ENCODE measurements at regions of chr3 and their contacts with region 1.

Region 1: DNA sequence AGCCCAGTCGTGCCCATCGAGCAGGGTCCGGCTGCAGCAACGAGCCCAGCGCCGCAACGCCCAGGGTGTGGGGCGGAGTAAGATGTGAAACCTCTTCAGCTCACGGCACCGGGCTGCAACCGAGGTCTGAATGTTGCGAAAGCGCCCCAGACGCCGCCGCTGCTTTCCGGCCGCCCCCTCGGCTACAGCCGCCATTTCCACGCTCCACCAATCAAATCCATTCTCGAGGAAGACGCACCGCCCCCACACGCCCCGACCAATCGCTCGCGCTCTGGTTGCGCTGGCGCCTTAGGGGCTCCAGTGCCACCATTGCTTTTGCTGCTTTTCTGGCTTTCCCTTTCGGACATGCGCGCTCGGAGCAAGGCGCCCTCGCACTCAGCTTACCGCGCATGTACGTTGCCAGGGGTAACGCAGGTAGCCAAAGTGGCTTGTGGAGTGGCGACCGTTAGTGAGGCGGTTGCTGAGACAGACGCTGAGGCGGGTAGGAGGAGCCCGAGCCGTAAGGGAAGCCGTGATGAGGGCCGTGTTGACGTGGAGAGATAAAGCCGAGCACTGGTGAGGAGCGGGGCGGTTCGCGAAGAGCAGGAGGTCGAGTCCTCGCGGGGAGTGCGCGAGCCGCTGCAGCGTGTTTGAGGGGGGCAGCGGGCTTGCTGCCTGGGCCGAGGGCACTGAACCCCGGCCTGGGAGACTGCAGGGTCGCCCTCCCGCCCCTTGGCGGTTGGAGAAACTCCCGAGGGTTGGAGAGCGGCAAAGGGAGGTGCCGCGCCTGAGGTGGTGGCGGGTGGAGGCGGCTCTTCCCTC is at the starts of genes IFT122 and MBD4:
- DNase-seq: peak; percentile 99
- ATAC-seq: peak; percentile 91
- H3K4me3 ChIP-seq: peak within 1 kb of the TSS; percentile 91
- H3K27ac ChIP-seq: peak within 1 kb of the TSS; percentile 91
- H3K4me1 ChIP-seq: peaks cover 14% of the 10 kb centered on the region; the same call in 1 of the 2 replicates
- H3K27me3 ChIP-seq: no peaks in the 10 kb centered on the region
- CTCF ChIP-seq: no peak
- EP300 ChIP-seq: no peak; a peak in 1 of 4 replicates
- POLR2A ChIP-seq: peak; percentile 89
- RAD21 ChIP-seq: no peak
- polyA plus RNA-seq, gene IFT122: 1.8 to 2.0 TPM
- polyA plus RNA-seq, gene MBD4: 17.7 to 23.6 TPM

Region 2: DNA sequence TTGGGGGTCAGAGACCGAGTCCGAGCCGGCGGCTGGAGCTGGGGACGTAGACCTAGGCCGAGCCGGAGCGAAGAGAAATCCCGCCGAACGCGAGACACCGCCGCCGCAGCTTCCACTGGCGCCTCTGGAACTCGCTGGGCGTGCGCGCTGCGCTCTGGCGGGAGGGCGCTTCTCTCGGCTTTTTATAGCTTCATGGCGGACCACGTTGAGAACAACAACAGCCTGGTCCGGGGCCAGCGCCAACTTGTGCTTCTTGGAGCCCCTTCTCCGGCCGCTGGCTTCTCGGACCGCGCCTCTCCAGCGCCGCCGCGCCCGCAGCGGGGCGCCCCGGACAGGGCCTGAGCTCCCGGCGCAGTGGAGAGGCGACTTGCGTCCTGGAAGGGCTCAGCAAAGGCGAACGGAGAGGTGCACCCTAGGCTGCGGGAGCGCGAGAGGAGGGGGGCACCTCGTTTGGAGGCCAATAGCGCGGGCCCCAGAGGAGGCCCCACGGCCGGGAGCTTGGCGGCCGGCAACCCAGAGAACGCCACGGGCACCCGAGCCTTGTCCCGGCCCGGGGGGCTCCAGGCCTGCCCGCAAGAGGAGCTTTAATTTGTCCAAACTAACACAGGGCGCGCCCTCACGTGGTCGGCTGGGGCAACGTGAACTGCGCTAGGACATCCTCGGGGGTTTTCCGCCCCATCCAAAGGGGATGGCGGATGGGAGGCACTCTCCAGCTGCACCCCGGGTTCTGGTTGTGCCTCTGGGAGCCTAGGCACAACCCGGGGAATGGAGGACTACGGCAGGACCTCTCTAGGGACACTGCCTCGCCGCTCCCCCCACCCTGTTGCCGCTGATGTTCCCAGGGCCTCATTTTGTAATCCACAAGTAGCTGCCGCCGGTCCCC is 123.6 kb before region 1 on chr3:
- CTCF ChIA-PET with region 1: interaction called, 9 read pairs
- POLR2A ChIA-PET with region 1: interaction called, 15 read pairs
- RAD21 ChIA-PET with region 1: interaction called, 5 read pairs
- SMC1A ChIA-PET with region 1: interaction called, 7 read pairs
- in situ Hi-C with region 1: no loop called
- intact Hi-C with region 1: no loop called
- DNase-seq: no peak
- ATAC-seq: peak; percentile 56
- H3K4me3 ChIP-seq: peak overlapping the region; percentile 88
- H3K27ac ChIP-seq: peak overlapping the region; percentile 41; the same call in 1 of the 2 replicates
- H3K4me1 ChIP-seq: peaks cover 16% of the 10 kb centered on the region
- H3K27me3 ChIP-seq: peaks cover 0 to 3% of the 10 kb centered on the region in 2 experiments; a peak in 2 of 4 replicates
- CTCF ChIP-seq: peak; percentile 61 to 76 (median 71)
- EP300 ChIP-seq: peak in 1 of 2 experiments; percentile 22; a peak in 1 of 4 replicates
- POLR2A ChIP-seq: peak; percentile 87
- RAD21 ChIP-seq: peak; percentile 52

Region 3: DNA sequence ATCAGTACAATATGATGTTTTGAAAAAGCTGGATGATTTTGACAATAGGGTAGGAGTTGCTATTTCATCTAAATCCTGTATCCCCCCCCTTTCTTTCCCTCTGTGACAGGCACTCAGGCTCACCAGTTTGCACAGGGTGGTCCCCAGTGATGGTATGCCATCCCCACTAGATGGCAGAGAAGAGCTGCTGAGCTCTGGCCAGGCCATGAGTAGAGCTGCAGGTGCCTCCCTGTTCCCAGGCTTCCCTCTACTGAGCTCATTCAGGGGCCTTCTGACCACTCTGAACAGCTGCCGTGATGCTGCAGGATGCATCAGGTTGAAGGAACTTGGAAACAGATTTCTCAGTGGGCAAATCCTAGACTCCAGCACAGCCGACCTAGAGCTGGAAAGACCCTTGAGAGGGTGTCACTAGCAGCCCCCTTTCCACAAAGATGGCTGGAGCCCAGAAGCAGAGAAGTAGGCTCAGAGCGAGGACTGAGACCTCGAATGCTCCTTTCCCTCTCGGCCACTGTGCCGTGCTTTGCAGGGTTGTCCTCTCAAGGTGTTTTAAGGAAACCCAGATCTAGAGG is 56.6 kb before region 1 on chr3:
- CTCF ChIA-PET with region 1: interaction called, 60 read pairs
- POLR2A ChIA-PET with region 1: interaction called, 4 read pairs
- RAD21 ChIA-PET with region 1: interaction called, 78 read pairs
- SMC1A ChIA-PET with region 1: interaction called, 72 read pairs
- in situ Hi-C with region 1: no loop called
- intact Hi-C with region 1: loop called (anchors 5 kb)
- DNase-seq: no peak
- ATAC-seq: peak; percentile 99
- H3K4me3 ChIP-seq: no peak overlapping the region
- H3K27ac ChIP-seq: no peak overlapping the region
- H3K4me1 ChIP-seq: no peaks in the 10 kb centered on the region
- H3K27me3 ChIP-seq: no peaks in the 10 kb centered on the region
- CTCF ChIP-seq: peak; percentile 85 to 89 (median 86)
- EP300 ChIP-seq: no peak
- POLR2A ChIP-seq: no peak
- RAD21 ChIP-seq: peak; percentile 85

Region 4: DNA sequence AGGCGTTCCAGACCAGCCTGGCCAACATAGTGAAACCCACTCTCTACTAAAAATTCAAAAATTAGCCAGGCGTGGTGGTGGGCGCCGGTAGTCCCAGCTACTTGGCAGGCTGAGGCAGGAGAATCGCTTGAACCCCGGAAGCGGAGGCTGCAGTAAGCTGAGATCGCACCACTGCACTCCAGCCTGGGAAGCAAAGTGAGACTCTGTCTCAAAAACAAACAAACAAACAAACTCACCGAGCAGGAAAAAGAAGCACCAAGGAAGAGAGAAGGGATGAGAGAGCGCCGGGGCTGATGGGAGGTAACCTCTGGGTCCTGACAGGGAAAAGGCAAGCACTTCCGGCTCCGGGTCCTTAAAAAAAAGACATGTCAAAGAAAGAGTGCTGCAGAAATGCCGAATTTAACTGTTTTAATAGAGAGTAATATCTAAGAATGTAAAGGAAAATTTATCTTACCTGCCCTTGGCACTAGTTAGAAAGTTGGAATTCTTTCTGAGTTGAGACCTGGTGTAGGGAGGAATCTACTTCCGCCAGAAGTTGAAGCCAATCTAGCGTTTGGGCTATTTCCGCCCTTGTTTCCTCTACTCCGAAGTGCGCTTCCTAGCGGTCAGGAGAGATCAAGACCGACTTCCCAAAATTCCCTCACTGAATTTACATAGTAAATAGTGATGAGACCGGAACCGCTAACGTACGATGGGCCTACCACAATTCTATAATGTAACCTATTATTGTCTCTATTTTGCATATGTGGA is 40.7 kb before region 1 on chr3:
- CTCF ChIA-PET with region 1: interaction called, 33 read pairs
- POLR2A ChIA-PET with region 1: interaction called, 18 read pairs
- RAD21 ChIA-PET with region 1: interaction called, 36 read pairs
- SMC1A ChIA-PET with region 1: interaction called, 275 read pairs
- in situ Hi-C with region 1: no loop called
- intact Hi-C with region 1: loop called (anchors 2 kb)
- DNase-seq: peak; percentile 93
- ATAC-seq: peak; percentile 83
- H3K4me3 ChIP-seq: peak overlapping the region; percentile 69
- H3K27ac ChIP-seq: peak overlapping the region; percentile 87
- H3K4me1 ChIP-seq: no peaks in the 10 kb centered on the region; the same call in 1 of the 2 replicates
- H3K27me3 ChIP-seq: no peaks in the 10 kb centered on the region
- CTCF ChIP-seq: peak; percentile 82 to 91 (median 87)
- EP300 ChIP-seq: no peak
- POLR2A ChIP-seq: no peak
- RAD21 ChIP-seq: peak; percentile 31; the same call in 1 of the 2 replicates

Region 5: DNA sequence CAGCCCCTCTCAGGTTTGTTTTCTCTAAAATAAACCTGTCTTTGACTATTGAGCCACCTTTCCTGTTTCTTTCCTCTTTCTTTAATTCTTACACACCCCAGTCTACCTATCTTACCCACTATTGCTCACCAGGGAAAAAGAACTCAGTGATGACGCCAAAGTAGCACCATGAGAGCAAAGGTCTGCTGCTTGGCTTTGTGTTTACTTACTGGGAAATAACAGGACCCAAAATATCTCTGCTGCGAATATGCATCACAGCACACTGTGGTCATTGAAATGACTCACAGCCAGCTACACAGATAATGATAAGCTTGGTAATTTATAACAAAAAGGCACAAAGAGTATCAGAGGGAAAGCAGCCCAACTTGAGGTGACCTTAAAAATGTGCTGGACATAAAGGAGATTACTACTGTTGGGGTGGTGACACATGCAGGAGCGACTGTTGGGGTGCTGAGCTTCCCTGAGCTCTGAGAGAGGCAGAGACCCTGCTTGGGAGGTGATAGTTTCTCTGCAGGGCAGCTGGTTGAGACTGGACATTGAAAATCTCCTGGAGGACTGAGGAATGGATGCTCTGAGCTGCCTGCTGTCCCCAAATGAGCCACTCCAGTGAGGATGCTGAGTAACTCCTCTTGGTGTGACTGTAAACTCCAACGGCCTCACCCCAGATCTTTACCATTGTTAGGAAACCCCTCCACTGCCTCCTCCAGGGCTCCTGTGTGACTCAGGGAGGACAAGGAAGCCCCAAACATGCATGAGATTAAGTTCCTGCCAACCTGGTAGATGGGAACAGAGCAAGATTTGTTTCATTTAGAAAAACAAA is 26.1 kb before region 1 on chr3:
- CTCF ChIA-PET with region 1: interaction called, 24 read pairs
- POLR2A ChIA-PET with region 1: interaction called, 24 read pairs
- RAD21 ChIA-PET with region 1: interaction called, 32 read pairs
- SMC1A ChIA-PET with region 1: interaction called, 275 read pairs
- in situ Hi-C with region 1: no loop called
- intact Hi-C with region 1: no loop called
- DNase-seq: no peak
- ATAC-seq: peak; percentile 96
- H3K4me3 ChIP-seq: no peak overlapping the region
- H3K27ac ChIP-seq: no peak overlapping the region
- H3K4me1 ChIP-seq: peaks cover 6% of the 10 kb centered on the region
- H3K27me3 ChIP-seq: no peaks in the 10 kb centered on the region
- CTCF ChIP-seq: no peak
- EP300 ChIP-seq: peak; percentile 79 to 82; a peak in 2 of 4 replicates
- POLR2A ChIP-seq: no peak
- RAD21 ChIP-seq: no peak

Region 6: GRCh38 chr3:129421988-129422745 is 17.9 kb before region 1 on chr3:
- CTCF ChIA-PET with region 1: interaction called, 17 read pairs
- POLR2A ChIA-PET with region 1: interaction called, 40 read pairs
- RAD21 ChIA-PET with region 1: interaction called, 12 read pairs
- SMC1A ChIA-PET with region 1: interaction called, 22 read pairs
- in situ Hi-C with region 1: no loop called
- intact Hi-C with region 1: no loop called
- DNase-seq: no peak
- ATAC-seq: no peak
- H3K4me3 ChIP-seq: no peak overlapping the region
- H3K27ac ChIP-seq: no peak overlapping the region
- H3K4me1 ChIP-seq: peaks cover 19% of the 10 kb centered on the region
- H3K27me3 ChIP-seq: no peaks in the 10 kb centered on the region
- CTCF ChIP-seq: no peak
- EP300 ChIP-seq: no peak
- POLR2A ChIP-seq: no peak
- RAD21 ChIP-seq: no peak

Region 7: DNA sequence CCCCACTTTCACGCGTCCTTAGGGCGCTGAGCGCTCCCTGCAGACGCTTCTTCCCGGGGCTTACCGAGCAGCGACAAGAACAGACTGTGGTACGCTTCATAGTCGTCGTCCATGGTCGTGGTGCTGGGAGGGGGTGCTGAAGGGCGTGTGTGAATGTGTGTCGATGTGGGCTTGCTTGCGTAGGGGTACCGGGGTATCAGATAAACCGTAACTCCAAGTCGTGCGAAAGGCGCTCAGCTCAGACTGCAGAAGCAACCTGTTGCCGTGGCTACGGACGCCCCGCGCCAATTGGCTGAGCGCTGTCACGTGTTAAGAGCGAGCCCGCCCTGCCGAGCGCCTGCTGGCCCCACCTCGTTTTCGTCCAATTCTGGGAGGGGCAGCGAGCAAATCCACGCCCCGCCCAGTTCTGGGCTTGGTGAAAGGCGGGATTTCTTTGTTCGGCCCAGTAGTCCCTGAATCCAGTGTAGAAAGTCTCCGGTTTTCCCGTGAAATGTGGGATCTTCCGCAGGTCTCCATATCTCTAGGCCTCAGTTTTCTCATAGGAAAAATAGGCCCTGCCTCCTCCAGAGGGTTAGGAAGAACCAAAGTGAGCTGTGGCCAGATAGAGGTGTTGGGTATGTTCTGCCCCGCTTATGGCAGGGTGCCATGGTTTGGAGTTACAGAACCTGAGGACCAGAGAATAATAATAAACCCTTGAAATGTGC is 11.5 kb before region 1 on chr3 and contains the start of gene EFCAB12:
- CTCF ChIA-PET with region 1: interaction called, 17 read pairs
- POLR2A ChIA-PET with region 1: interaction called, 40 read pairs
- RAD21 ChIA-PET with region 1: interaction called, 12 read pairs
- SMC1A ChIA-PET with region 1: interaction called, 22 read pairs
- in situ Hi-C with region 1: no loop called
- intact Hi-C with region 1: no loop called
- DNase-seq: no peak
- ATAC-seq: peak; percentile 86
- H3K4me3 ChIP-seq: peak within 1 kb of the TSS; percentile 50; the same call in 1 of the 2 replicates
- H3K27ac ChIP-seq: no peak within 1 kb of the TSS; the same call in 1 of the 2 replicates
- H3K4me1 ChIP-seq: peaks cover 26% of the 10 kb centered on the region
- H3K27me3 ChIP-seq: no peaks in the 10 kb centered on the region
- CTCF ChIP-seq: no peak
- EP300 ChIP-seq: no peak
- POLR2A ChIP-seq: peak; percentile 78
- RAD21 ChIP-seq: no peak
- polyA plus RNA-seq, gene EFCAB12: 0.02 to 0.03 TPM

Measured in GM12878 (cell line).